RWPE1 (cell line): ENCODE measurements at regions of chr3 and their contacts with region 1.

Region 1: DNA sequence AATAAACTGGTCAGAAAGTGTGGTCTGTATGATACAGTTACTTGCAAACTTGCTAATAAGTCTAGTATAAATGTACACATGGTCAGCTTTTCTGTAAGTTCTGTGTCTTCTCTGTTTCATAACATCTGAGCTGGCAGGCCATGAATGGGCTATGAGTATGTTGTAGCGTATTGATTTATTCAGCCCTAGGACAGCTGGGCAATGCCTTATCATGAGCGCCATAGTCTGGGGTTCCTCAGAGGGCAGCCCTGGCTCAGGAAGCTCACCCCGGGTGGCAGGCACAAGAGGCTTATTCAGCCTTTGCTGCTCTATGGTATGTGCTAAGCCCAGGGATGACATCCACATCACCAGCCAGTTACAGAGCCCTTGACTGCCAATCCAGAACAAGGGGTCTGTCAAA is 50.7 kb upstream of the CCR2 start:
- DNase-seq: no peak
- H3K27ac ChIP-seq: no peak overlapping the region
- CTCF ChIP-seq: no peak

Region 2: GRCh38 chr3:46186471-46187340 is 116.5 kb before region 1 on chr3:
- CTCF ChIA-PET with region 1: no interaction called
- POLR2A ChIA-PET with region 1: no interaction called
- DNase-seq: no peak
- H3K27ac ChIP-seq: no peak overlapping the region
- CTCF ChIP-seq: no peak

Region 3: GRCh38 chr3:46261926-46262594 is 41.2 kb before region 1 on chr3:
- CTCF ChIA-PET with region 1: no interaction called
- POLR2A ChIA-PET with region 1: interaction called, 11 read pairs
- DNase-seq: no peak
- H3K27ac ChIP-seq: no peak overlapping the region
- CTCF ChIP-seq: no peak

Region 4: GRCh38 chr3:46462111-46462510 is 158.9 kb after region 1 on chr3:
- CTCF ChIA-PET with region 1: no interaction called
- POLR2A ChIA-PET with region 1: no interaction called
- DNase-seq: no peak
- H3K27ac ChIP-seq: no peak overlapping the region
- CTCF ChIP-seq: no peak